ENCODE measurements at regions of chr6 and their contacts with region 1.

Region 1: GRCh38 chr6:166402582-166403277 is 20.0 kb upstream of the MPC1 start:
- DNase-seq: no peak
- ATAC-seq: no peak
- H3K4me3 ChIP-seq: no peak overlapping the region
- H3K27ac ChIP-seq: no peak overlapping the region
- H3K4me1 ChIP-seq: peaks cover 52% of the 10 kb centered on the region
- H3K27me3 ChIP-seq: peaks cover 3 to 38% of the 10 kb centered on the region in 2 experiments
- CTCF ChIP-seq: no peak
- EP300 ChIP-seq: no peak
- POLR2A ChIP-seq: no peak
- RAD21 ChIP-seq: no peak

Region 2: GRCh38 chr6:166156942-166157341 is 245.8 kb before region 1 on chr6:
- CTCF ChIA-PET with region 1: no interaction called
- POLR2A ChIA-PET with region 1: no interaction called
- in situ Hi-C with region 1: no loop called
- intact Hi-C with region 1: loop called (anchors 1 kb)
- DNase-seq: peak; percentile 6
- ATAC-seq: peak; percentile 67
- H3K4me3 ChIP-seq: no peak overlapping the region
- H3K27ac ChIP-seq: no peak overlapping the region
- H3K4me1 ChIP-seq: no peaks in the 10 kb centered on the region
- H3K27me3 ChIP-seq: peaks cover 0 to 27% of the 10 kb centered on the region in 2 experiments; a peak in 2 of 5 replicates
- CTCF ChIP-seq: peak; percentile 53
- EP300 ChIP-seq: no peak
- POLR2A ChIP-seq: no peak
- RAD21 ChIP-seq: no peak

Region 3: GRCh38 chr6:166313255-166314070 is 89.3 kb before region 1 on chr6:
- CTCF ChIA-PET with region 1: interaction called, 35 read pairs
- POLR2A ChIA-PET with region 1: interaction called, 3 read pairs
- in situ Hi-C with region 1: no loop called
- intact Hi-C with region 1: loop called (anchors 1 kb)
- DNase-seq: peak; percentile 41
- ATAC-seq: peak; percentile 65
- H3K4me3 ChIP-seq: no peak overlapping the region
- H3K27ac ChIP-seq: no peak overlapping the region
- H3K4me1 ChIP-seq: peaks cover 20% of the 10 kb centered on the region
- H3K27me3 ChIP-seq: peaks cover 7 to 26% of the 10 kb centered on the region in 2 experiments; a peak in 4 of 5 replicates
- CTCF ChIP-seq: peak; percentile 84
- EP300 ChIP-seq: no peak
- POLR2A ChIP-seq: no peak
- RAD21 ChIP-seq: peak; percentile 72

Region 4: GRCh38 chr6:166456395-166457156 is 53.8 kb after region 1 on chr6:
- CTCF ChIA-PET with region 1: no interaction called
- POLR2A ChIA-PET with region 1: no interaction called
- in situ Hi-C with region 1: no loop called
- intact Hi-C with region 1: no loop called
- DNase-seq: no peak
- ATAC-seq: peak; percentile 60
- H3K4me3 ChIP-seq: no peak overlapping the region
- H3K27ac ChIP-seq: no peak overlapping the region
- H3K4me1 ChIP-seq: no peaks in the 10 kb centered on the region
- H3K27me3 ChIP-seq: peaks cover 5 to 53% of the 10 kb centered on the region in 2 experiments; a peak in 4 of 5 replicates
- CTCF ChIP-seq: peak; percentile 29; the same call in 1 of the 2 replicates
- EP300 ChIP-seq: no peak
- POLR2A ChIP-seq: no peak
- RAD21 ChIP-seq: no peak

Region 5: GRCh38 chr6:166627033-166627874 is 224.5 kb after region 1 on chr6 and contains the start of gene RPS6KA2:
- CTCF ChIA-PET with region 1: no interaction called
- POLR2A ChIA-PET with region 1: no interaction called
- in situ Hi-C with region 1: no loop called
- intact Hi-C with region 1: no loop called
- DNase-seq: peak; percentile 89
- ATAC-seq: peak; percentile 96
- H3K4me3 ChIP-seq: peak within 1 kb of the TSS; percentile 53 to 67 (median 59)
- H3K27ac ChIP-seq: no peak within 1 kb of the TSS
- H3K4me1 ChIP-seq: peaks cover 12% of the 10 kb centered on the region
- H3K27me3 ChIP-seq: peaks cover 16 to 65% of the 10 kb centered on the region in 2 experiments
- CTCF ChIP-seq: peak; percentile 30; the same call in 1 of the 2 replicates
- EP300 ChIP-seq: no peak
- POLR2A ChIP-seq: no peak
- RAD21 ChIP-seq: no peak
- total RNA-seq, gene RPS6KA2: 0.03 and 0.22 TPM in 2 replicates

Measured in HepG2 (cell line).